ENCODE measurements at regions of chr5 and their contacts with region 1.

Region 1: GRCh38 chr5:143066556-143067281 is 296.5 kb downstream of the ARHGAP26 start:
- DNase-seq: no peak
- H3K4me3 Mint-ChIP-seq: no peak overlapping the region
- H3K27ac Mint-ChIP-seq: no peak overlapping the region
- H3K4me1 Mint-ChIP-seq: peaks cover 12% of the 10 kb centered on the region
- H3K27me3 Mint-ChIP-seq: no peaks in the 10 kb centered on the region
- CTCF ChIP-seq: no peak

Region 2: GRCh38 chr5:143094087-143094521 is 27.4 kb after region 1 on chr5:
- CTCF ChIA-PET with region 1: no interaction called
- intact Hi-C with region 1: no loop called
- DNase-seq: no peak
- H3K4me3 Mint-ChIP-seq: no peak overlapping the region
- H3K27ac Mint-ChIP-seq: no peak overlapping the region
- H3K4me1 Mint-ChIP-seq: peaks cover 8% of the 10 kb centered on the region
- H3K27me3 Mint-ChIP-seq: no peaks in the 10 kb centered on the region
- CTCF ChIP-seq: no peak

Region 3: GRCh38 chr5:143142596-143143435 is 76.1 kb after region 1 on chr5:
- CTCF ChIA-PET with region 1: no interaction called
- intact Hi-C with region 1: no loop called
- DNase-seq: no peak
- H3K4me3 Mint-ChIP-seq: no peak overlapping the region
- H3K27ac Mint-ChIP-seq: no peak overlapping the region
- H3K4me1 Mint-ChIP-seq: peaks cover 10% of the 10 kb centered on the region
- H3K27me3 Mint-ChIP-seq: no peaks in the 10 kb centered on the region
- CTCF ChIP-seq: no peak

Region 4: DNA sequence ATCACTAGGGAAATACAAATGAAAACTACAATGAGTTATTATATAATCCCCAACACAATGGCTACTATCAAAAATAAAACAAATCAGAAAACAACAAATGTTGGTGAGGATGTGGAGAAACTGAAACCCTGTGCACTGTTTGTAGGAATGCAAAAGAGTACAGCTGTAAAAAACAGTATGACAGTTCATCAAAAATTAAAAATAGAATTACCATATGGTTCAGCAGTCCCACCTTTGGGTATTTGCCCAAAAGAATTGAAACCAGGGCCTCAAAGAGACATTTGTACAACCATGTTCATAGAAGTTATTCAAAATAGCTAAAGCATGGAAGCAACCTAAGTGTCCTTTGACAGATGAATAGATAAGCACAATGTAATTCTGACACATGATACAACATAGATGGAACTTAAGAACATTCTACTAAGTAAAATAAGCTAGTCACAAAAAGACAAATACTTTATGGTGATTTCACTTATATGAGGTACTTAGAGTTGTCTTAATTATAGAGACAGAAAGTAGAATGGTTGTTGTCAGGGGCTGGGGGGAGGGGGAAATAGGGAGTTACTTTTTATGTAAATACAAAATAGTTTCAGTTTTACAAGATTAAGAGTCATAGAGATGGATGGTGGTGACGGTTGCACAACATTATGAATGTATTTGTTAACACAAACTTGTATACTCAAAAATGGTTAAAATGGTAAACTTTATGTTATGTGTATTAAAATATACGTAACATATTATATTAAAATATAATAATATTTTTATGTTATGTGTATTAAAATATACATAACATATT is 1206.7 kb after region 1 on chr5:
- CTCF ChIA-PET with region 1: interaction called, 10 read pairs
- intact Hi-C with region 1: no loop called
- DNase-seq: no peak
- H3K4me3 Mint-ChIP-seq: no peak overlapping the region
- H3K27ac Mint-ChIP-seq: no peak overlapping the region
- H3K4me1 Mint-ChIP-seq: no peaks in the 10 kb centered on the region
- H3K27me3 Mint-ChIP-seq: peaks cover 10% of the 10 kb centered on the region
- CTCF ChIP-seq: no peak

Measured in Calu3 (cell line).